Gastrocnemius medialis (tissue), 4 donors: ENCODE measurements at regions of chr7 and their contacts with region 1.

Region 1: DNA sequence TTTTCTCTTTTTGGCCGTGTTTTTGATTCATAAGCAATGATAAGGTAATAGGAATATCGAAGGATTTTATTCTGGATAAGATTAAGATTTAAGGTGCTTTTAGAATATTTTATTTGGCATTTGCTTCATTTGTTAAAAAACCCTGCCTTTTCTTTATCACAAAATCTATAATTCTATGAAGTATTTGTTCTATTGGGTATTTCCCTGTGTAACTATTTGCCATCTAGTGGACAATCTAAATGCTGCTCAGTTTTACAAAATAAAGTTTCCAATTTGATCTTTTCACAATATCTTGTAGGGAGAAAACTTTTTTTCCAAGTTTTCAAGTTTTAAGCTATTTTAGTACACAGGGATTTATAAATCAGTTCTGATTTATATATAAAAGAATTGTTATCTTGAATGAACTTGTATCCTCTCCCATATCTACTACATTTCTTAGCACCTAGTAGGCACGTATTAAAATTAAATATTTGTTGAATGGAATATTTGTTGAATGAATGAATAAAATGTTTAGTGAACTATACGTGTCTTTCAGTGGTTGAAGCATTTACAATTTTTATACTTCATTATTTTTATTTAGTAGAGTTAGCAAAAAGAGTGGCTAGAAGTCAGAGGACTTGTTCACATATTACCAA is 26.5 kb downstream of the ANKRD7 start:
- DNase-seq: no peak
- ATAC-seq: no peak
- H3K4me3 ChIP-seq: no peak overlapping the region
- H3K27ac ChIP-seq: no peak overlapping the region
- H3K4me1 ChIP-seq: no peaks in the 10 kb centered on the region
- H3K27me3 ChIP-seq: no peaks in the 10 kb centered on the region
- CTCF ChIP-seq: no peak
- POLR2A ChIP-seq: no peak

Region 2: GRCh38 chr7:117296066-117296465 is 954.9 kb before region 1 on chr7:
- in situ Hi-C with region 1: no loop called
- intact Hi-C with region 1: no loop called
- DNase-seq: no peak
- ATAC-seq: no peak
- H3K4me3 ChIP-seq: no peak overlapping the region
- H3K27ac ChIP-seq: no peak overlapping the region
- H3K4me1 ChIP-seq: no peaks in the 10 kb centered on the region
- H3K27me3 ChIP-seq: no peaks in the 10 kb centered on the region
- CTCF ChIP-seq: no peak
- POLR2A ChIP-seq: no peak

Region 3: DNA sequence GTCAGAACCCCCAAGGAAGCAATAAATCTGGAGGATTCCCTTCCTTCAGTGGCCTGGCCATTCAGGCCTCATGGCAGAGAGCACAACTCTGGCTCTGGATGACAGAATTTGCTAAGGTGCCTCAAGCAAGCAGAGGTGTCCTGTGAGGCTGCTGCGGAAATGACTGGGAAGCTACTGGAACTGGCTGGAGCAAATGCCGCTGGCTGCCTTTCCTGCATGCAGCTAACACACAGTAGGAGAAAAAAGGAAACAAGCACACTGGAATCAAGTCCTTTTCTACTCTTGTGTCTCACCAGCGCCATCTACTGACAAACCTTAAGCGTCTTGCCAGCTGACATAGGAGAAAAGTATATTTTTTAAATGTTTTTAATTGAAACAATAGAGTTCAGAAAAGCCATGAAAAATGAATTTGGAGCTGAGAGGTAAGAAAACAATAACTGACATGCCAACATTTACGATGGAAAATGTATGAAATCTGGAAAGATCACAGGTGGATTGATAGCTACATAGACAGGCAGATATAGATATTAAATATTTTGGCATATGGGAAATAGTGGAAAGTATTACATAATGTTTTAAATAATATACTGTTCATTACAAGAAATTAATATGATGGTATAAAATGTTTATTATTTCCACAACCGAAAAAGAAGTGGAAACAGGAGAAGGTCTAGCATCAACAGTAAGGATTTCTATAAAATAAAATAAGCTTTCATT is 925.1 kb after region 1 on chr7:
- in situ Hi-C with region 1: loop called in 1 of 4 experiments (anchors 25 kb)
- intact Hi-C with region 1: no loop called
- DNase-seq: no peak
- ATAC-seq: no peak
- H3K4me3 ChIP-seq: no peak overlapping the region
- H3K27ac ChIP-seq: no peak overlapping the region
- H3K4me1 ChIP-seq: no peaks in the 10 kb centered on the region
- H3K27me3 ChIP-seq: no peaks in the 10 kb centered on the region
- CTCF ChIP-seq: peak in 3 of 5 experiments; percentile 20 to 57 (median 53)
- POLR2A ChIP-seq: no peak